Panc1 (cell line): ENCODE measurements at regions of chr12 and their contacts with region 1.

Region 1: GRCh38 chr12:68317047-68317667 is 15.0 kb downstream of the MDM1 start:
- DNase-seq: no peak
- ATAC-seq: no peak
- H3K4me3 ChIP-seq: no peak overlapping the region
- H3K27ac ChIP-seq: no peak overlapping the region; the same call in 1 of the 2 replicates
- H3K4me1 ChIP-seq: no peaks in the 10 kb centered on the region; the same call in 1 of the 2 replicates
- H3K27me3 ChIP-seq: no peaks in the 10 kb centered on the region
- CTCF ChIP-seq: peak; percentile 60; the same call in 1 of the 2 replicates

Region 2: DNA sequence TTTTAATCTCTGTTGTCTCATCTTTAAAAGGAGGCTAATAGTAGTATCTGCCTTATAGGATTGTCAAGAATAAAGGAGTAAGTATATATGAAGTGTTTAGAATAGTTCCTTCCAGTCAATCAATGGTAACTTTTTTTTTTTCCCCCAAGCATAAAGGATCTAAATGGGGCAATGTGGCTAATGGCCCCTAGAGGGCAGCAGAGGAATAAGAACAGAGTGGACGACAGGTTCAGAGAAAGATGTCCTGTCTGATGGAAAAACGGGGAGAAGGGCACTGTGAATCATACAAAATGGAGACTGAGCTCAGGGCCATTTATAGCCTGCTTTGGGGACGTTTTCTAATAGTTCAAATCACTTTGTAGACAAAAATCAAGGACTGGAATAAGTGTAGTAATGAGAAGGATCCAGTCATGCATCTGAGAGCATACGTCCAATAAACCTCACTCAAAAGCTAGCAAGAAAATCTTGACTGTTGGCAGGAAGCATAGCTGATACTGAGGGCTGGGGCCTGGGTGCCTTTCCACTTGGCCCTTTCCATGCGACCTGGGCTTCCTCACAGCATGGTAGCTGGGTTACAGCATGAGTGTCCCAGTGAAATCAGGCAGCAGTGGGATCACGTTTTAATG is 276.6 kb before region 1 on chr12:
- CTCF ChIA-PET with region 1: interaction called, 3 read pairs
- POLR2A ChIA-PET with region 1: no interaction called
- in situ Hi-C with region 1: no loop called
- intact Hi-C with region 1: loop called (anchors 5 kb)
- DNase-seq: peak; percentile 35
- ATAC-seq: peak; percentile 93
- H3K4me3 ChIP-seq: no peak overlapping the region
- H3K27ac ChIP-seq: no peak overlapping the region
- H3K4me1 ChIP-seq: no peaks in the 10 kb centered on the region; the same call in 1 of the 2 replicates
- H3K27me3 ChIP-seq: no peaks in the 10 kb centered on the region
- CTCF ChIP-seq: peak; percentile 92

Region 3: GRCh38 chr12:68223083-68223747 is 93.9 kb before region 1 on chr12:
- CTCF ChIA-PET with region 1: interaction called, 3 read pairs
- POLR2A ChIA-PET with region 1: no interaction called
- in situ Hi-C with region 1: no loop called
- intact Hi-C with region 1: loop called (anchors 1 kb)
- DNase-seq: peak; percentile 58
- ATAC-seq: peak; percentile 99
- H3K4me3 ChIP-seq: peak overlapping the region in 1 of 2 experiments; percentile 23; a peak in 2 of 4 replicates
- H3K27ac ChIP-seq: peak overlapping the region; percentile 51
- H3K4me1 ChIP-seq: peaks cover 24% of the 10 kb centered on the region
- H3K27me3 ChIP-seq: peaks cover 6% of the 10 kb centered on the region
- CTCF ChIP-seq: peak; percentile 90

Region 4: GRCh38 chr12:68294251-68294650 is 22.9 kb before region 1 on chr12:
- CTCF ChIA-PET with region 1: no interaction called
- POLR2A ChIA-PET with region 1: no interaction called
- in situ Hi-C with region 1: no loop called
- intact Hi-C with region 1: no loop called
- DNase-seq: no peak
- ATAC-seq: no peak
- H3K4me3 ChIP-seq: no peak overlapping the region
- H3K27ac ChIP-seq: no peak overlapping the region
- H3K4me1 ChIP-seq: peaks cover 6% of the 10 kb centered on the region; the same call in 1 of the 2 replicates
- H3K27me3 ChIP-seq: no peaks in the 10 kb centered on the region
- CTCF ChIP-seq: no peak